ENCODE measurements at regions of chr20 and their contacts with region 1.

Region 1: DNA sequence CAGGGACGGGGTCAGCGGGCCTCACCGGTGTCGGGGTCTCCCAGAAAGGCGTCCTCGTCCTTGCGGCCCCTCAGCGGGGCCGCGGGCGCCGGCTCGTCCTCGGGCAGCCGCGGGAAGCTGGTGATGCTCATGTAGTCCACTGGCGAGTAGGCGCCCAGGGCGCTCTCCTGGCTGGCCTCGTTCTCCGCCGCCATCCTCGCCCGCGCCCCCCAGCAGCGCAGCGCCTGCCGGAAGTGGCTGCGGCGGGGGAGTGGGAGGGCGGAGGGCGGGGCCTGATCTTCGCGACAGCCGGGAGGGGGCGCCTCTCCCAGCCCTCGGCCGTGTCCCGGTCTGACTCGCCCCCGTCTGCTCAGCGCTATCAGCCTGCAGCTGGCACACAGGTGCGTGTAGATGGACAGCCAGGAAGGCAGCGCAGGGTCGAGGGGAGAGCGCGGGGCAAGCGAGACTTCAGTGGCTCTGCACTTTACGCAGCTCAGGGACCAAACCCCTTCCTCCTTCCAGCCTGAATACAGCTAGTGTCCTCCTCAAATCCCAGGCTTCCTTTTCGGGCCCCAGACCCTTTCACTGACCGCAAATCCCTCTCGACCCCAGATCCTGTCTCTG is at the start of gene GGT7:
- DNase-seq: peak; percentile 81 to 94 (median 93)
- ATAC-seq: peak; percentile 64 to 67
- H3K4me3 ChIP-seq: peak within 1 kb of the TSS; percentile 71
- H3K27ac ChIP-seq: peak within 1 kb of the TSS; percentile 38
- H3K4me1 ChIP-seq: peaks cover 7% of the 10 kb centered on the region
- H3K27me3 ChIP-seq: no peaks in the 10 kb centered on the region
- total RNA-seq, gene GGT7: 17.8 to 22.0 (median 18.6) TPM

Region 2: DNA sequence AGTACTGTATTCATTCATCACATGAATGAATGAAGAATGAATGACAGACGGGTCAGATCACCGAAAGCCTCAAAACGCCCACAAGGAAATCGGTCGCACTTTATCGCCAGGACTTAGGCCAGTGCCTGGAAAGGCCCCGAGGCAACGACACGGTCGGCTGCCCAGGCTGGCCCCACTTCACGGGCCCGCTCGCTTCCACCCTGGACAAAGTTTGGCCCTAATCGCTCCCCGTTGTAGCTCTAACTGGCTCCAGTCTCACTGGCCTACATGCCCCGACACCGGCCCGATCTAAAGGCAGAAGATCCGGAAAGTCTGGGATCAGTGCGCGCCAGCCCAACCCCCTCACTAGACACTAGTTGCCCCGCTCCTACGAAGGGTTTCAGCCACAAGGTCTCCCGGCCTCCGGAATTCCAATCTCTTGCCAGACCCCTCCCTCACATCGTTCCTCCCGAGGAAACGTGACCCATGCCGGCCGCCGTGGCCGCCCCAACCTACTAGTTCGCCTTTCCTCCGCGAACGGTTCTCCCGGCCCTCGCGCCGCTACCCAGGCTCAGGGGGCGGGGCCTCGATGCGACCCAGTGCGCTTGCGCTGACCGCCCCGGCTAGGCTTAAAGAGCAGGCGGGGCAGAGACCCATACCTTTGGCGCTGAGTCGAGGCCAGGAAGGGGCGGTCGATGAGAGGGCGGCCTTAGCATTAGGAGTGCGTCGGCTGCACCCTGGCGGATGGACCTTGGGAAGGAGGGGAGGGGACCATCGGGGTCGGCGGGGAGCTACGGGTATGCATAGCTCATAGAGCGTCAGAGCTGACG is 82.7 kb after region 1 on chr20 and contains the starts of genes GSS and MYH7B:
- intact Hi-C with region 1: loop called (anchors 2 to 5 kb)
- DNase-seq: peak; percentile 98 to 100 (median 100)
- ATAC-seq: peak; percentile 97
- H3K4me3 ChIP-seq: peak within 1 kb of the TSS; percentile 46
- H3K27ac ChIP-seq: peak within 1 kb of the TSS; percentile 71
- H3K4me1 ChIP-seq: no peaks in the 10 kb centered on the region
- H3K27me3 ChIP-seq: no peaks in the 10 kb centered on the region
- total RNA-seq, gene GSS: 23.6 to 32.6 (median 26.3) TPM
- total RNA-seq, gene MYH7B: 43.3 to 134 (median 99.2) TPM